ENCODE measurements at regions of chr1 and their contacts with region 1.

Region 1: GRCh38 chr1:71068325-71069240 is 12.3 kb downstream of the ZRANB2 start:
- DNase-seq: no peak
- H3K4me3 ChIP-seq: no peak overlapping the region
- H3K27ac ChIP-seq: no peak overlapping the region
- H3K4me1 ChIP-seq: no peaks in the 10 kb centered on the region
- H3K27me3 ChIP-seq: no peaks in the 10 kb centered on the region
- CTCF ChIP-seq: no peak
- EP300 ChIP-seq: no peak
- POLR2A ChIP-seq: no peak
- RAD21 ChIP-seq: no peak

Region 2: DNA sequence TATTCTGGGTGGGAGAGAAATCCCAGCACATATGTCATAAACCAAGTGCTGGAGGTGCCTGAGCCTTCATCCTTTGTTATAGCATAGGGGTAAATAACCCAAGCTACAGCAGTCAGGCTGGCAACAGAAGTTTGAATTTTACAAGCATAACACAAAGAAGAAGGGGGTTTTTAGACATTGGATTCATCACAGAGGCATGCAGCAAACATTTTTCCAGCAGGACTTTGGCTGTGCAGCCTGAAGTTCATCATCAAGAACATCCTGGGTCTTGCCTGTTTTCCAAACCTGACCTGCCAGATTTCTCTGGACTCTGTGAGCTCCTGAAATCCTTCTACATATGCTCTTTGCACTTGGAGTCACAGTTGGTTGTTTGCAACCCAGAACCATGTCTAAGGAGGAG is 37.2 kb before region 1 on chr1:
- CTCF ChIA-PET with region 1: no interaction called
- POLR2A ChIA-PET with region 1: no interaction called
- DNase-seq: no peak
- H3K4me3 ChIP-seq: no peak overlapping the region
- H3K27ac ChIP-seq: no peak overlapping the region
- H3K4me1 ChIP-seq: no peaks in the 10 kb centered on the region
- H3K27me3 ChIP-seq: no peaks in the 10 kb centered on the region
- CTCF ChIP-seq: no peak
- EP300 ChIP-seq: no peak
- POLR2A ChIP-seq: no peak
- RAD21 ChIP-seq: no peak

Region 3: DNA sequence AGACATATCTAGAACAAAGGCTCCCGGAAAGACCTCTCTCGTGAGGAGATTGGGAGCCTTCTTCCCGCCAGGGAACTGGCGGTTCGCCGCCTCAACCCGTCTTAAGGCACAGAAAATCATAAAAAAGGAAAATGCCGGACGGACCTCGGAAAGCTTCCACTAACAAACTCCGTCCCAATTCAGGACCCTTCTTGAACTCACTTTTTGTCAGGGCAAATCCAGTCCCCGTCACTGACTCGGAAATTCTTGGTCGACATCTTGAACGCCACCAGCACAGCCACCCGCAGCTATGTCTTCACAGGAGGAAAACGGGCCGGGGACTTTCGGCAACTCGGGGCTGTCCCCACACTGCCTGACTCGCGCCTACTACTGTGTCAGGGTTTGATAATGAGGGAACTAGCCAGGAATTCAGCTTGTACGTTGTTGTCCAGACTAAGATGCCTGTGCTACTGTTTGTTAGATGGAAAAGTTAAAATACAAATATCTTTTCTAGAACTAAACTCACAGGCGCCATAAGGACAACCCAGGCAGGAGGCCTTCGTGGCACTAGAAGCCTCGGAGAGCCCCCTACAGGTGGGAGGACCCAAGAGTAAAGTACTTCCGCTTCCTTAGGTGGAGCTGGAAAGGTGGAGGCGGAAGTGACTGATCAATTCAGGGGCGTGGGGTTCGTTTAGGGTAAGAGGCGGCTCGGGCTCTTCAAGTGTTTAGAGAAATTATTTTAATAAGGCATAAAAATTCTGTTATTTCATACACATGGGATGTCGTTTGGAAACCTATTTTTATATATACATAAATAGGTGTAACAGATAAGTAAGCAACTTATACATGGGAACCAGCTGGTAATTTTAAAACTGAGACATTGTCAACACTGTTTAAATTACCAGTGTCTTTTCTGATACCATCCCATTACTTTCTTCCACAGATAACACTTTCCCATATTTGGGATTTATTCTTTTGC is 12.4 kb after region 1 on chr1 and contains the start of gene ZRANB2:
- CTCF ChIA-PET with region 1: no interaction called
- POLR2A ChIA-PET with region 1: interaction called, 26 read pairs
- DNase-seq: peak; percentile 79 to 88
- H3K4me3 ChIP-seq: peak within 1 kb of the TSS; percentile 91 to 96 (median 93)
- H3K27ac ChIP-seq: peak within 1 kb of the TSS; percentile 93
- H3K4me1 ChIP-seq: no peaks in the 10 kb centered on the region; a peak in 2 of 7 replicates
- H3K27me3 ChIP-seq: peaks cover 1 to 9% (median 5%) of the 10 kb centered on the region in 4 experiments; a peak in 5 of 7 replicates
- CTCF ChIP-seq: peak; percentile 52 to 67 (median 61)
- EP300 ChIP-seq: no peak
- POLR2A ChIP-seq: peak; percentile 77 to 96
- RAD21 ChIP-seq: no peak
- total RNA-seq, gene ZRANB2: 94.1 and 103 TPM in 2 replicates

Region 4: DNA sequence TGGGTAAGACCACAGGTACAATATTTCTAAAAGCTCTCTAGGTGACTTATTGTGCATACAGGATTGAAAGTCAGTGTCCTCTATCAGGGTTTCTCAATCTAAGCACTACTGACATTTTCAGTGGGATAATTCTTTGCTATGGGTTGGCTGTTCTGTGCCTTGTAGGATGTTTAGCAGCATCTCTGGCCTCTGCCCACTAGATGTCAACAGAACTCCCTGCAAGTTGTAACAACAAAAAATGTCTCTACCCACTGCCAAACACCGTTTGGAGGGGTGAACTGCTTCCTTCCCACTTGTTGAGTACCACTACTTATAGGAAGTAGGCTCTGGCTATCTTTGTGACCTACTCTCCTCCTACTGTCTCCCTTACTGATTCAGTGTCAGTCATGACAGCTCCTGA is 102.3 kb after region 1 on chr1:
- CTCF ChIA-PET with region 1: no interaction called
- POLR2A ChIA-PET with region 1: no interaction called
- DNase-seq: no peak
- H3K4me3 ChIP-seq: no peak overlapping the region
- H3K27ac ChIP-seq: no peak overlapping the region
- H3K4me1 ChIP-seq: no peaks in the 10 kb centered on the region
- H3K27me3 ChIP-seq: no peaks in the 10 kb centered on the region
- CTCF ChIP-seq: peak in 2 of 3 experiments; percentile 34 to 44; a peak in 2 of 4 replicates
- EP300 ChIP-seq: no peak
- POLR2A ChIP-seq: no peak
- RAD21 ChIP-seq: peak; percentile 67 to 69

Measured in H1 (cell line).